Activated CD4-positive, alpha-beta T cell treated with anti-CD3 and anti-CD28 coated beads for 36 hours (primary cell): ENCODE measurements at regions of chr1 and their contacts with region 1.

Region 1: GRCh38 chr1:31815752-31816500 is at the start of gene SPOCD1:
- DNase-seq: peak; percentile 94
- ATAC-seq: peak; percentile 93
- H3K4me3 Mint-ChIP-seq: no peak within 1 kb of the TSS
- H3K27ac Mint-ChIP-seq: peak within 1 kb of the TSS; percentile 17
- H3K4me1 Mint-ChIP-seq: peaks cover 9% of the 10 kb centered on the region
- H3K27me3 Mint-ChIP-seq: no peaks in the 10 kb centered on the region
- total RNA-seq, gene SPOCD1: 0.79 to 0.91 TPM

Region 2: GRCh38 chr1:31715087-31715872 is 100.6 kb before region 1 on chr1:
- CTCF ChIA-PET with region 1: no interaction called
- POLR2A ChIA-PET with region 1: no interaction called
- intact Hi-C with region 1: no loop called
- DNase-seq: peak; percentile 68
- ATAC-seq: peak; percentile 69
- H3K4me3 Mint-ChIP-seq: peak overlapping the region; percentile 44
- H3K27ac Mint-ChIP-seq: no peak overlapping the region
- H3K4me1 Mint-ChIP-seq: peaks cover 12% of the 10 kb centered on the region
- H3K27me3 Mint-ChIP-seq: peaks cover 41% of the 10 kb centered on the region

Region 3: GRCh38 chr1:31831397-31832378 is 15.8 kb after region 1 on chr1:
- CTCF ChIA-PET with region 1: interaction called, 10 read pairs
- POLR2A ChIA-PET with region 1: no interaction called
- intact Hi-C with region 1: no loop called
- DNase-seq: no peak
- ATAC-seq: no peak
- H3K4me3 Mint-ChIP-seq: no peak overlapping the region
- H3K27ac Mint-ChIP-seq: no peak overlapping the region
- H3K4me1 Mint-ChIP-seq: peaks cover 20% of the 10 kb centered on the region
- H3K27me3 Mint-ChIP-seq: no peaks in the 10 kb centered on the region

Region 4: DNA sequence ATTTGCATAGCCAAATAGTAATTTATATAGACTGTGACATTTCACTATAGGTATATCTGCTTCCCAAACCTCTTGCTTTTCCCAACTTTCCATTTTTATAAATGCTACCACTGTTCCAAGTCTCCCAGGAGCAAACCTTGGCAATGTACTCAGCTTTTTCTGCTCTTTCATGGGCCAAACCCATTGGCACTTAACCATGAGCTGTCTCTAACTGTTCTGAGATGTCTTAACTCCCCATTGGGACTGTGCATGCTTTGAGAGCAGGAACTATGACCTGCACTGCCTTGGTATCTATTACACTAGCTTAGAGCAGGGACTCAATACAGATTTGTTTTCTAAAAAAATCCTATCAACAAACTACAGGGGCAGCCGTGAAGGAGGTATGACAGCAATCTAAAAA is 175.3 kb after region 1 on chr1:
- CTCF ChIA-PET with region 1: no interaction called
- POLR2A ChIA-PET with region 1: no interaction called
- intact Hi-C with region 1: no loop called
- DNase-seq: no peak
- ATAC-seq: peak; percentile 9
- H3K4me3 Mint-ChIP-seq: no peak overlapping the region
- H3K27ac Mint-ChIP-seq: no peak overlapping the region
- H3K4me1 Mint-ChIP-seq: peaks cover 18% of the 10 kb centered on the region
- H3K27me3 Mint-ChIP-seq: no peaks in the 10 kb centered on the region